Common myeloid progenitor, CD34-positive (primary cell): ENCODE measurements at regions of chr12 and their contacts with region 1.

Region 1: DNA sequence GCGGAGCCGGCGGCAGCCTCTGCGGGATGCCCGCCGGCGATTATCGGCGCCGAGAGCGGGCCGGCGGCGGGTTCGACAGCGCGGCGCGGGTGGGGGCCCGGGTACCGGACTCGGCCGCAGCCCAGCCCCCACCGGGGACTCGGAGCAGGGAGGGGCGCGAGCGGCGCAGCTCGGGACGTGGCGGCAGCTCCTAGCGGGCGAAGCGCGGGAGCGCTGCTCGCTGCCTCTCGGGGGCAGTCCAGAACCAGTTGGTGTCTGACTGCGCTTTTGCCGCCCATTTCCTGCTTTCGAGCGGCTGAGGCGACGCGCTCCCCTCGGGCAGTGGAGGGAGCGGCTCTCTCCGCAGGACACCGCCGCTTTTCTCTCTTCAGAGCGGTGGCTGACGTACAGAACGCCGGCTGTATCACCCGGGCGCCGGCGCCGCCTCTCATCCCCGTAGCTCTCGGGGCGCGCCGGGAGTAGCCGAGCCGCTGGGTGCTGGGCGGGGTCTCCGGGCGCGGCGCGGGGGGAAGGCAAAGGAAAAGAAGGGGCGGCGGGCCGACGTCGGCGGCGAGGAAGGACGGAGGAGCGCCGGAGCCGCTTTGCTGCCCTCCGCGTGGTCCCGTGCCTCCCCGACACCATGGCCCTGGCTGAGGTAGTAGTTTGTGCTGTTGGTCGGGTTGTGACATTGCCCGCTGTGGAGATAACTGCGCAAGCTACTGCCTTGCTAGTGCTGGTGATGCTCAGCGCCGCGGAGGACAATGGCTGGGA is 136.6 kb downstream of the MON2 start:
- DNase-seq: peak; percentile 91 to 95 (median 93)
- H3K4me3 ChIP-seq: peak overlapping the region; percentile 77 to 94 (median 92)
- H3K27ac ChIP-seq: peak overlapping the region; percentile 99
- H3K4me1 ChIP-seq: peaks cover 18 to 35% (median 22%) of the 10 kb centered on the region in 4 experiments
- H3K27me3 ChIP-seq: no peaks in the 10 kb centered on the region

Region 2: DNA sequence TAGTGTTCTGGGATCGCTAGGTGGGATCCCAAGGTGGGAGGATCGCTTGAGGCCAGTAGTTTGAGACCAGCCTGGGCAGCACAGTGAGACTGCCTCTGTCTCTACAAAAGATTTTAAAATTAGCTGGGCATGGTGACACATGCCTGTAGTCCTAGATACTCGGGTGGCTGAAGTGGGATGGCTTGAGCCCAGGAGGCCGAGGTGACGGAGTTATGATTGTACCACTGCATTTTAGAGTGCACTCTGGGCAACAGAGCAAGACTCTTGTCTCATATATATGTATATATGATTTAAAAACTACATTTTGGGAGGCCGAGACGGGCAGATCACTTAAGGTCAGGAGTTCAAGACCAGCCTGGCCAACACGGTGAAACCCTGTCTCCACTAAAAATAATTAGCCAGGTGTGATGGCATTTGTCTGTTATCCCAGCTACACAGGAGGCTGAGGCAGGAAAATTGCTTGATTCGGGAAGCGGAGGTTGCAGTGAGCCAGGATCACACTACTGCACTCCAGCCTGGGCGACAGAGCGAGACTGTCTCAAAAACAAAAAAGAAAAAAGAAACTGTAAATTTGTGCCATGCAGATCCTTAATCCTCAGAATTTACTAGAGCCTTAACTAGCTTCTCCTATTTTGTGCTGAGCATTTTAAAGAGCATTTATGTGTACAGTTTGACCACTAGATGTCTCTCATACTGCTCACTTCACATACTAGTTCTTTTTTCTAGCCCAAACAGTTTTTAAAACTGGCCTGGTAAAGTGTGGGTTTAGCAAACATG is 21.8 kb before region 1 on chr12:
- CTCF ChIA-PET with region 1: interaction called, 10 read pairs
- POLR2A ChIA-PET with region 1: interaction called, 5 read pairs
- DNase-seq: peak; percentile 77 to 86 (median 84)
- H3K4me3 ChIP-seq: no peak overlapping the region
- H3K27ac ChIP-seq: no peak overlapping the region
- H3K4me1 ChIP-seq: peaks cover 0 to 15% (median 11%) of the 10 kb centered on the region in 4 experiments
- H3K27me3 ChIP-seq: no peaks in the 10 kb centered on the region

Region 3: GRCh38 chr12:62621101-62621638 is 17.9 kb after region 1 on chr12:
- CTCF ChIA-PET with region 1: interaction called, 11 read pairs
- POLR2A ChIA-PET with region 1: no interaction called
- DNase-seq: no peak
- H3K4me3 ChIP-seq: no peak overlapping the region
- H3K27ac ChIP-seq: no peak overlapping the region
- H3K4me1 ChIP-seq: peaks cover 0 to 8% (median 0%) of the 10 kb centered on the region in 4 experiments
- H3K27me3 ChIP-seq: no peaks in the 10 kb centered on the region

Region 4: DNA sequence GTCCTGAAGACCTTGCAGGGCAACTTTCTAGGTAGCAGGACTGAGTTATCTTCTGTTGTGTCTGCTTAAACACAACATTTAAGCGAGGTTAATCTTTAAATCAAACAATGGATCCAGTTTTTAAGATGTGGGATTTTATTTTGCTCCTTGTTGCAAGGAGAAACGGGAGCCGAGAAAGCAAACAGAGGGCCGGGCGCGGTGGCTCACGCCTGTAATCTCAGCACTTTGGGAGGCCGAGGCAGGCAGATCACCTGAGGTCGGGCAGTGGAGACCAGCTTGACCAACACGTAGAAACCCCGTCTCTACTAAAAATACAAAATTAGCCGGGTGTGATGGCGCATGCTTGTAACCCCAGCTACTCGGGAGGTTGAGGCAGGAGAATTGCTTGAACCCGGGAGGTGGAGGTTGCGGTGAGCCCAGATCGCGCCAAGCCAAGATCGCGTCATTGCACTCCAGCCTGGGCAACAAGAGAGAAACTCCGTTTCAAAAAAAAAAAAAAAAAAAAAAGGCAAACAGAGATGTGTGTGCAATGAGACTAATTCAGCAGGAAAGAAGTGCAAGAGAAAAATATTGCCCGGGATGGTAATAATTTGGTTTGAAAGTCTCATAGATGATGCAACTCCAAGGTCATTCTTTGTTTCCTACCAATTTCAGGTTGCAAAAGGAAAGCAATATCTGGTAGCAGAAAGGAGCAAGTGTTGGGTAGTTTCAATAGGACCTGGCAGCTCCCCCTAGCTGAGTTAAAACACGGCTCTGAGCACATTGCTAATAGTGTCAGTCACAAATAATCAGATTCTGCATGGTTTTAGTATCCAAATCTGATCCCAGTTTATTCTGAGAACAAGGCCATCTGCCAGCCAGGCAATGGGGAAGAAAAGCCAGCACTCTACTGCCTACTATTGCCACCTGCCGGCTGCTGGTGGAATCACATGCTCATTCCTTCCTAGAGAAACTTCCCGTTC is 190.3 kb after region 1 on chr12:
- CTCF ChIA-PET with region 1: interaction called, 23 read pairs
- POLR2A ChIA-PET with region 1: interaction called, 3 read pairs
- DNase-seq: peak; percentile 69 to 81 (median 74)
- H3K4me3 ChIP-seq: no peak overlapping the region
- H3K27ac ChIP-seq: peak overlapping the region in 1 of 2 experiments; percentile 1
- H3K4me1 ChIP-seq: peaks cover 0 to 2% (median 0%) of the 10 kb centered on the region in 4 experiments
- H3K27me3 ChIP-seq: no peaks in the 10 kb centered on the region